ENCODE measurements at regions of chr11 and their contacts with region 1.

Region 1: GRCh38 chr11:43504316-43504950 is 145.7 kb downstream of the TTC17 start:
- DNase-seq: no peak
- ATAC-seq: peak; percentile 32 to 60 (median 46)
- H3K4me3 ChIP-seq: no peak overlapping the region
- H3K27ac ChIP-seq: no peak overlapping the region
- H3K4me1 ChIP-seq: no peaks in the 10 kb centered on the region
- H3K27me3 ChIP-seq: peaks cover 0 to 5% (median 0%) of the 10 kb centered on the region in 9 donors
- CTCF ChIP-seq: peak in 10 of 12 donors; percentile 8 to 47 (median 29)
- POLR2A ChIP-seq: no peak

Region 2: GRCh38 chr11:43434893-43435292 is 69.5 kb before region 1 on chr11:
- intact Hi-C with region 1: no loop called
- DNase-seq: no peak
- ATAC-seq: no peak
- H3K4me3 ChIP-seq: no peak overlapping the region
- H3K27ac ChIP-seq: no peak overlapping the region
- H3K4me1 ChIP-seq: peaks cover 0 to 6% (median 0%) of the 10 kb centered on the region in 12 donors
- H3K27me3 ChIP-seq: no peaks in the 10 kb centered on the region
- CTCF ChIP-seq: no peak
- POLR2A ChIP-seq: no peak

Region 3: GRCh38 chr11:43567396-43567975 is 63.1 kb after region 1 on chr11:
- intact Hi-C with region 1: no loop called
- DNase-seq: no peak
- ATAC-seq: peak in 1 of 4 donors; percentile 43
- H3K4me3 ChIP-seq: no peak overlapping the region
- H3K27ac ChIP-seq: no peak overlapping the region
- H3K4me1 ChIP-seq: no peaks in the 10 kb centered on the region
- H3K27me3 ChIP-seq: peaks cover 0 to 47% (median 7%) of the 10 kb centered on the region in 9 donors
- CTCF ChIP-seq: peak; percentile 57 to 79 (median 62)
- POLR2A ChIP-seq: no peak

Region 4: DNA sequence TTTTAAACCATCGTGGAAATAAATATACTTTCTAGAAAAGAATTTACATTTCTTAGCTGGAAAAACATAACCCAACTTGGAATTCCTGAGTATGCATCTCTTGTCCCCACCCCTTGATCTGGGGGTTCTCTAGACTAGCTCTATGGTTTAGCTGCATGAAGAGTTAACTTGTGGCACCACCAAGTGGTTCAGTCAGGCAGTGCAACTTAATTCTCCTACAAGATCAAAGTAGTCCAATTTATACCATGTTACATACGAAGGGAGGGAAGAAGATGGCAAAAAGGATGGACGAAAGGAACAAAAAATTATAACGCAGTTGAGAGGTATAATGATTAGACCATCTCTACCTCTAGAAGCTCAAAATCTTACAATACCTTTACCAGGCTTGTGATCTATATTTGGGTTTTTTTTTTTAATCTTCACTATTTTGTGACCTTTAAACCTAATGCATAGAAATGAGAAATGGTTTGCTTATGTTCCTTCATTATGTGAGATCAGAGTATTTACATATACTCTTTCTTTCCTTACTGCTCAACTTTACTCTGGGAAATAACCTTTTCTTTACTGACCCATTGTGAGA is 347.7 kb after region 1 on chr11:
- intact Hi-C with region 1: loop called in 1 of 10 experiments (anchors 5 kb)
- DNase-seq: peak in 4 of 5 donors; percentile 21 to 34 (median 32)
- ATAC-seq: peak; percentile 51 to 72 (median 66)
- H3K4me3 ChIP-seq: no peak overlapping the region
- H3K27ac ChIP-seq: no peak overlapping the region
- H3K4me1 ChIP-seq: no peaks in the 10 kb centered on the region
- H3K27me3 ChIP-seq: no peaks in the 10 kb centered on the region
- CTCF ChIP-seq: peak; percentile 67 to 83 (median 72)
- POLR2A ChIP-seq: no peak

Measured in heart left ventricle (tissue), 16 donors.